Head of caudate nucleus (tissue), 42 donors: ENCODE measurements at regions of chr2 and their contacts with region 1.

Region 1: GRCh38 chr2:203535078-203535783 is at the start of gene RAPH1:
- DNase-seq: peak; percentile 38 to 87 (median 74)

Region 2: GRCh38 chr2:203650860-203651613 is 115.8 kb after region 1 on chr2:
- intact Hi-C with region 1: loop called (anchors 2 kb)
- DNase-seq: peak in 20 of 42 donors; percentile 6 to 77 (median 42)

Region 3: GRCh38 chr2:203774760-203775159 is 239.5 kb after region 1 on chr2:
- intact Hi-C with region 1: no loop called
- DNase-seq: no peak